Right ventricle myocardium inferior (tissue), 1 donor: ENCODE measurements at regions of chr10 and their contacts with region 1.

Region 1: GRCh38 chr10:18684953-18685352 is 25.7 kb downstream of the ARL5B start:
- DNase-seq: no peak
- ATAC-seq: no peak

Region 2: DNA sequence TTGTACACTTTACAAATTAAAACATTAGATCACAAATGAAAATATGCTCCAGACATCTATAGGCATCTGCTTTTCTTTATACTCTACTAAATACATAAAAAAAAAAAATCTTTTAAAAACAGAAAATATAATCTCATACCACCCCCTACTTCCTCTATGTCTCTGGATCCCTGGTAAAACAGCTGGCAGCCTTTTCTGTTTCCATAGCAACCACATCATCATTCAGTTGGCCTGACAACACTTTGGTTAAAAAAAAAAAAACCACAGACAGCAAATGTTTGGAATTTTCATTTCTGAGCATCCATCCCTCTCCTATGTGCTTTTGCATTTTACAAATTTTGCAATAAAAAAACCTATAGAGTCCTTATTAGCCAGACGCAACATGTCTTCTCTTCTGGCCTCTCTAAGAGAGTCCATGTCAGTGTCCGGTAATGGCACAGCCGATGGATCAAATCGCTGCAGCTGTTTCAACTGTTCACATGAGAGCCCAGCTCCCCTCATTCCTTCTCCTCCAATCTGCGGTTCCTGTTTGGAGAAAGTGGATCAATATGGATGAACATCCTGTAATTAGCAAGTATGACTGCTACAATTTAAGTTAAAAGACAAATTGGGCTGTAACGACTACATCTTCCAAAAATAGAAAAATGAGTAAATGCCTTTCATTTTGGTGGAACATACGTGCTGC is 139.2 kb before region 1 on chr10:
- intact Hi-C with region 1: no loop called
- DNase-seq: no peak
- ATAC-seq: no peak

Region 3: DNA sequence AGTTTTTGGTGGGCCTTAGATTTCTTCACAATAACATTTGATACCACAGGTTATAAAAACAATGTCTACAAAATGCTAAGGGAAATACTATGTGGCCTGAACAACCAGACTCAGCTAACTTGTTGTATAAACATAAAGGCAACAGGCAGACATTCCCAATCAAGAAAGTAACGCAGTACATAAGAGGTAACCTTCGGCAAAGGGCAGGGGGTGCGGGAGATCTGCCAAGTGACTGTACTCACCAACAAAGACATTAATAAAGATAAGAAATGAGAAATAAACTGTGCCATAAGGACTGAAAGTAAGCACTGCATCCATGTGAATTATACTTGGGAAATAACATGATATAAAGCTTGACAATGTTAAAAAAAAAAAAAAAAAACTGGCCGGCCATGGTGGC is 49.0 kb before region 1 on chr10:
- intact Hi-C with region 1: no loop called
- DNase-seq: no peak
- ATAC-seq: no peak

Region 4: DNA sequence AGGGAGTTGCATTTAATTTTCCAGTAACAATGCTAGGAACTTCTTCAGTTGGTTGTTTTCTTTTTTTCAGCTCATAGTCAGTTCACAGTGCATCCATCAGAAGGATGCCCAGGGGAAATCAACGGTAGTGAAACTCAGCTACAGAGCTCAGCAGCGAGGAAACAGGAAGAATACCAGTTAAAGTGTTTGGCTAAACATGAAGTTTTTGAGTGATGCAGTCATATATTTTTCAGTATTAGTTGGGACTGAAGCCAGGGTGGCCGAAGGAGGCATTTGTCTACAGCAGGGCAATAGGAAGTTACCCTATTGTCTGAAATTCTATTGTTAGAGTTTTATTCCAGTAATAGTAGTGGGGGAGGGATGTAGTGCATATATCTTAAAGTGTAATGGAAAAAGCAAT is 318.4 kb after region 1 on chr10:
- intact Hi-C with region 1: loop called (anchors 2 kb)
- DNase-seq: no peak
- ATAC-seq: no peak